CD4-positive, alpha-beta T cell (primary cell): ENCODE measurements at regions of chr7 and their contacts with region 1.

Region 1: GRCh38 chr7:24665564-24666294 is 91.5 kb downstream of the GSDME start:
- DNase-seq: peak in 12 of 14 experiments; percentile 3 to 69 (median 18)
- ATAC-seq: peak; percentile 39
- H3K4me3 ChIP-seq: no peak overlapping the region
- H3K4me3 Mint-ChIP-seq: no peak overlapping the region
- H3K27ac ChIP-seq: no peak overlapping the region
- H3K27ac Mint-ChIP-seq: no peak overlapping the region
- H3K4me1 ChIP-seq: no peaks in the 10 kb centered on the region
- H3K4me1 Mint-ChIP-seq: no peaks in the 10 kb centered on the region
- H3K27me3 ChIP-seq: no peaks in the 10 kb centered on the region
- H3K27me3 Mint-ChIP-seq: no peaks in the 10 kb centered on the region
- CTCF ChIP-seq: peak; percentile 86

Region 2: GRCh38 chr7:23570592-23571200 is 1095.0 kb before region 1 on chr7:
- CTCF ChIA-PET with region 1: no interaction called
- POLR2A ChIA-PET with region 1: no interaction called
- intact Hi-C with region 1: loop called (anchors 1 to 5 kb)
- DNase-seq: peak; percentile 48 to 83 (median 59)
- ATAC-seq: peak; percentile 81
- H3K4me3 ChIP-seq: no peak overlapping the region
- H3K4me3 Mint-ChIP-seq: no peak overlapping the region
- H3K27ac ChIP-seq: no peak overlapping the region
- H3K27ac Mint-ChIP-seq: no peak overlapping the region
- H3K4me1 ChIP-seq: peaks cover 4% of the 10 kb centered on the region
- H3K4me1 Mint-ChIP-seq: no peaks in the 10 kb centered on the region
- H3K27me3 ChIP-seq: peaks cover 0 to 2% of the 10 kb centered on the region in 2 experiments
- H3K27me3 Mint-ChIP-seq: peaks cover 16% of the 10 kb centered on the region
- CTCF ChIP-seq: peak; percentile 79

Region 3: GRCh38 chr7:23696916-23697441 is 968.8 kb before region 1 on chr7:
- CTCF ChIA-PET with region 1: interaction called, 4 read pairs
- POLR2A ChIA-PET with region 1: no interaction called
- intact Hi-C with region 1: loop called in 1 of 2 experiments (anchors 10 kb)
- DNase-seq: peak; percentile 24 to 76 (median 45)
- ATAC-seq: peak; percentile 49
- H3K4me3 ChIP-seq: no peak overlapping the region
- H3K4me3 Mint-ChIP-seq: no peak overlapping the region
- H3K27ac ChIP-seq: no peak overlapping the region
- H3K27ac Mint-ChIP-seq: no peak overlapping the region
- H3K4me1 ChIP-seq: peaks cover 5% of the 10 kb centered on the region
- H3K4me1 Mint-ChIP-seq: no peaks in the 10 kb centered on the region
- H3K27me3 ChIP-seq: no peaks in the 10 kb centered on the region
- H3K27me3 Mint-ChIP-seq: no peaks in the 10 kb centered on the region
- CTCF ChIP-seq: peak; percentile 70

Region 4: GRCh38 chr7:23712368-23713284 is 953.1 kb before region 1 on chr7:
- CTCF ChIA-PET with region 1: no interaction called
- POLR2A ChIA-PET with region 1: no interaction called
- intact Hi-C with region 1: loop called in 1 of 2 experiments (anchors 5 kb)
- DNase-seq: peak in 3 of 14 experiments; percentile 58 to 69 (median 67)
- ATAC-seq: no peak
- H3K4me3 ChIP-seq: no peak overlapping the region
- H3K4me3 Mint-ChIP-seq: no peak overlapping the region
- H3K27ac ChIP-seq: no peak overlapping the region
- H3K27ac Mint-ChIP-seq: no peak overlapping the region
- H3K4me1 ChIP-seq: no peaks in the 10 kb centered on the region
- H3K4me1 Mint-ChIP-seq: no peaks in the 10 kb centered on the region
- H3K27me3 ChIP-seq: no peaks in the 10 kb centered on the region
- H3K27me3 Mint-ChIP-seq: no peaks in the 10 kb centered on the region
- CTCF ChIP-seq: peak; percentile 93

Region 5: GRCh38 chr7:23863209-23863798 is 802.4 kb before region 1 on chr7:
- CTCF ChIA-PET with region 1: no interaction called
- POLR2A ChIA-PET with region 1: no interaction called
- intact Hi-C with region 1: loop called in 1 of 2 experiments (anchors 5 kb)
- DNase-seq: peak in 4 of 14 experiments; percentile 8 to 45 (median 30)
- ATAC-seq: no peak
- H3K4me3 ChIP-seq: no peak overlapping the region
- H3K4me3 Mint-ChIP-seq: no peak overlapping the region
- H3K27ac ChIP-seq: no peak overlapping the region
- H3K27ac Mint-ChIP-seq: no peak overlapping the region
- H3K4me1 ChIP-seq: no peaks in the 10 kb centered on the region
- H3K4me1 Mint-ChIP-seq: no peaks in the 10 kb centered on the region
- H3K27me3 ChIP-seq: no peaks in the 10 kb centered on the region
- H3K27me3 Mint-ChIP-seq: no peaks in the 10 kb centered on the region
- CTCF ChIP-seq: no peak

Region 6: DNA sequence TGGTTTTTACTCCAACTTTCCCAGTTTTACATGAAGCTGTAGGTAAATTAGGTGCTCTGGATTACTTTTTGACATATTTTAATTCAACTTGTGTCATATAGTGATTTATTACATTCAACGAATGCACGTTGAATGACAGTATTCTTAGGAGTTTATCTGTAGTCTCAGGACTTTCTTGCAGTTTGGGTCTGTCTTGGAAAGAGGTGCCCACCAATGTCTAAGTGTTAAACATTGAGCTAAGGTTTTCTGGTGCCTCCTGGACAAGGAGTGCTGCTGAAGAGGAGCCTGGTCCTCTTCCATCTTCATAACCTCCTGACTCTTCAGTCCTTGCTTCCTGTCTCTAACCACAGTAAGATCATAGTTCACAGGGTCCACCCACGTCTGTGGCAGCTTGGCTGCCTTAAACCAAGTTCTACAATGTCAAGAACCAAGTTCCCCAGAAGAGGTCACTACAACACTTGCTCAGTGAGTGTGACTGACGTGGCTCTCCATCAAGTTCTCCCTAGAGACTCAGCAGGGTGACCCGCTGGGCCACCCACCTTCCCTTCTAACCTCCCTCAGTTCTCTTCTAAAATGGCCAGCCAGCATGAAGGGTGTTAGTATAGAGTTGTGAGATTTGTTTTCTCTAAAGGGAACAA is 375.6 kb before region 1 on chr7:
- CTCF ChIA-PET with region 1: interaction called, 4 read pairs
- POLR2A ChIA-PET with region 1: no interaction called
- intact Hi-C with region 1: loop called in 1 of 2 experiments (anchors 2 kb)
- DNase-seq: peak in 4 of 14 experiments; percentile 9 to 64 (median 56)
- ATAC-seq: peak; percentile 72
- H3K4me3 ChIP-seq: no peak overlapping the region
- H3K4me3 Mint-ChIP-seq: no peak overlapping the region
- H3K27ac ChIP-seq: no peak overlapping the region
- H3K27ac Mint-ChIP-seq: no peak overlapping the region
- H3K4me1 ChIP-seq: peaks cover 5% of the 10 kb centered on the region
- H3K4me1 Mint-ChIP-seq: peaks cover 12% of the 10 kb centered on the region
- H3K27me3 ChIP-seq: peaks cover 17 to 29% of the 10 kb centered on the region in 2 experiments
- H3K27me3 Mint-ChIP-seq: peaks cover 64% of the 10 kb centered on the region
- CTCF ChIP-seq: peak; percentile 14

Region 7: GRCh38 chr7:24401628-24402593 is 263.8 kb before region 1 on chr7:
- CTCF ChIA-PET with region 1: no interaction called
- POLR2A ChIA-PET with region 1: no interaction called
- intact Hi-C with region 1: loop called (anchors 1 to 2 kb)
- DNase-seq: peak in 3 of 14 experiments; percentile 22 to 50 (median 30)
- ATAC-seq: no peak
- H3K4me3 ChIP-seq: no peak overlapping the region
- H3K4me3 Mint-ChIP-seq: no peak overlapping the region
- H3K27ac ChIP-seq: no peak overlapping the region
- H3K27ac Mint-ChIP-seq: no peak overlapping the region
- H3K4me1 ChIP-seq: peaks cover 5% of the 10 kb centered on the region
- H3K4me1 Mint-ChIP-seq: peaks cover 13% of the 10 kb centered on the region
- H3K27me3 ChIP-seq: no peaks in the 10 kb centered on the region
- H3K27me3 Mint-ChIP-seq: no peaks in the 10 kb centered on the region
- CTCF ChIP-seq: peak; percentile 50